ENCODE measurements at regions of chr7 and their contacts with region 1.

Region 1: DNA sequence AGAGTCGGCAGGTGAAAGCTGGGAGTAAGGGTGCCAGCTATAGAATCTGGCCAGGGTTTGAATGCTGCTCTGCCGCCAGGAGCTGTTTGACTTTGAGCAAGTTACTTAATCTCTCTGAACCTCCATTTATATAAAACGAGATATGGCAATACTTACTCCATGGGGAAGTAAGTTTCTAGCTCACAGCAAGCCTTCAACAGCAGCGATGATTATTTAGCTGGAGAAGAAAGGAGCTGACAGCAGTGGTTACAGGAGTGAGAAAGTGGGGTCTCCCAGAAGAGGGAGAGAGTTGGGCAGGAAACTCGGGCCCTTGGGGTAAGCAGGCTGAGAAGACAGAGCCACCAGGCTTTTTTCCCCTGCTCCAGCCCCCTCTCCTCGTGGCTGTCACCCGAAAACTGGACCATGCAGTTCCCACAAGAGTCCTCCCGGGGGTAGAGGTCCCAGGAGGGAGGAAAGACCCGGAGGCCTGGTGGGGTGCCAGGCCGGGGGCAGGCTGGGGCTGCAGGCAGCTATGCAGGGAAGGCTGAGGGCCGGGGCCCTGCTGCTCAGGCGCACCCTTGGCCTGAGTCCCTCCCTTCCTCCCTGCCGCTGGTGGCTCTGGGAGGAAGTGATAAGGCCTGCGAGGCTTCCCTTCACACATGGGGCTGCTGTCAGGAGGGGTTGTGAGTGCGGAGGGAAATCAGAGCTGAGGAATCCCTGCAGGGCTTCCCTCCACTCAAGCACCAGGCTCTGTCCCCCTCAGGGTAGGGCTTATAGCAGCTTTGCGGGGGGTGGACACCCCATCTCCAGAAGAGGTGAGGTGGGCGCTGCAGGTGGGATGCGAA is 3.5 kb downstream of the NOS3 start:
- DNase-seq: peak; percentile 67
- H3K4me3 Mint-ChIP-seq: peak overlapping the region; percentile 66
- H3K27ac Mint-ChIP-seq: peak overlapping the region; percentile 85
- H3K4me1 Mint-ChIP-seq: peaks cover 52% of the 10 kb centered on the region
- H3K27me3 Mint-ChIP-seq: peaks cover 27% of the 10 kb centered on the region

Region 2: DNA sequence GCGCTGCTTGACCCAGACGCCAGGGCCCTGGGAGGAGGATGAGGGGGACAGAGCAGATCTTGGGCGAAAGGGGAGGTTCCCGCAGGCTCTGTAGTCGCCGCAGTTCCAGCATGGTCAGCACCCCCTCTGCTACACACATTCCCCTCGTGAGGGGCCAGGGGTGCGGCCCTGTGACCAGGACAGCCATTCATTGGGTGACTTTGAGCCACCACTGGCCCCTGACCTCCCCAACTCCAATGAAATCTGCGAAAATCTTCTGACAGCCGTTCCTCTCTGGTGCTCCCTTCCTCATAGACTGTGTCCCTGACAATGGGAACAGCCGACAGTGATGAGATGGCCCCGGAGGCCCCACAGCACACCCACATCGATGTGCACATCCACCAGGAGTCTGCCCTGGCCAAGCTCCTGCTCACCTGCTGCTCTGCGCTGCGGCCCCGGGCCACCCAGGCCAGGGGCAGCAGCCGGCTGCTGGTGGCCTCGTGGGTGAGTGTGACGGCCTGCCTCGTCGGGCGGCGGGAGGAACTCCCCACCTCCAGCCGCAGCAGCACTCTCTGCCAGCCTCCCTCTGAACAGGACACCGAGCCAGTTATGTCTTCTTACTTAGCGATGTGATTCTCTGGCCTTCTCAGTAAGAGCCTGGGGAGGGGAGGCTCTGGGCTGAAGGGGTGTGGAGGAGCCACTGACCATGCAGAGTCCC is 193.0 kb before region 1 on chr7:
- CTCF ChIA-PET with region 1: no interaction called
- DNase-seq: no peak
- H3K4me3 Mint-ChIP-seq: peak overlapping the region; percentile 35
- H3K27ac Mint-ChIP-seq: no peak overlapping the region
- H3K4me1 Mint-ChIP-seq: peaks cover 11% of the 10 kb centered on the region
- H3K27me3 Mint-ChIP-seq: peaks cover 77% of the 10 kb centered on the region

Region 3: DNA sequence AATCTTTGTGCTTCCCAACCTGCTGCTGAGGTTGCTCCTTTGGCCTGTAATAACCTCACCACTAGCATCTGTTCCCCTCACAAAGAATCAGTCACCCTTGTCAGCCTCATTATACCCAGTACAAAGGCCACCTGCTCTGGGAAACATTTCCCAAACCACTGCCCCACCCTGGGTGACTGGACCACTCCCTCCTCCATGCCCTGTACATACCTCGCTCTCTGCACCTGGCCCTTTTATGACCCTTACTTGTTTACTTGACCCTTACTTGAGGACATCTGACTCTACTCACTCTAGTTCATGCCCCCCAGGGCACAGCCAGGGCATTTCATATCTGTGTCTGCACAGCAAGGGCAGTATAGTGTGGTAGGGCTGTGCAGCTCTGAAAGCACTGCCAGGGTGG is 163.4 kb before region 1 on chr7:
- CTCF ChIA-PET with region 1: no interaction called
- DNase-seq: no peak
- H3K4me3 Mint-ChIP-seq: no peak overlapping the region
- H3K27ac Mint-ChIP-seq: no peak overlapping the region
- H3K4me1 Mint-ChIP-seq: no peaks in the 10 kb centered on the region
- H3K27me3 Mint-ChIP-seq: peaks cover 61% of the 10 kb centered on the region

Region 4: GRCh38 chr7:150909200-150909995 is 85.0 kb before region 1 on chr7:
- CTCF ChIA-PET with region 1: no interaction called
- DNase-seq: peak; percentile 75
- H3K4me3 Mint-ChIP-seq: peak overlapping the region; percentile 37
- H3K27ac Mint-ChIP-seq: peak overlapping the region; percentile 43
- H3K4me1 Mint-ChIP-seq: peaks cover 9% of the 10 kb centered on the region
- H3K27me3 Mint-ChIP-seq: peaks cover 61% of the 10 kb centered on the region

Region 5: GRCh38 chr7:151008511-151009323 is 14.4 kb after region 1 on chr7:
- CTCF ChIA-PET with region 1: interaction called, 16 read pairs
- DNase-seq: peak; percentile 72
- H3K4me3 Mint-ChIP-seq: peak overlapping the region; percentile 65
- H3K27ac Mint-ChIP-seq: peak overlapping the region; percentile 90
- H3K4me1 Mint-ChIP-seq: peaks cover 71% of the 10 kb centered on the region
- H3K27me3 Mint-ChIP-seq: no peaks in the 10 kb centered on the region